ENCODE measurements at regions of chr5 and their contacts with region 1.

Region 1: DNA sequence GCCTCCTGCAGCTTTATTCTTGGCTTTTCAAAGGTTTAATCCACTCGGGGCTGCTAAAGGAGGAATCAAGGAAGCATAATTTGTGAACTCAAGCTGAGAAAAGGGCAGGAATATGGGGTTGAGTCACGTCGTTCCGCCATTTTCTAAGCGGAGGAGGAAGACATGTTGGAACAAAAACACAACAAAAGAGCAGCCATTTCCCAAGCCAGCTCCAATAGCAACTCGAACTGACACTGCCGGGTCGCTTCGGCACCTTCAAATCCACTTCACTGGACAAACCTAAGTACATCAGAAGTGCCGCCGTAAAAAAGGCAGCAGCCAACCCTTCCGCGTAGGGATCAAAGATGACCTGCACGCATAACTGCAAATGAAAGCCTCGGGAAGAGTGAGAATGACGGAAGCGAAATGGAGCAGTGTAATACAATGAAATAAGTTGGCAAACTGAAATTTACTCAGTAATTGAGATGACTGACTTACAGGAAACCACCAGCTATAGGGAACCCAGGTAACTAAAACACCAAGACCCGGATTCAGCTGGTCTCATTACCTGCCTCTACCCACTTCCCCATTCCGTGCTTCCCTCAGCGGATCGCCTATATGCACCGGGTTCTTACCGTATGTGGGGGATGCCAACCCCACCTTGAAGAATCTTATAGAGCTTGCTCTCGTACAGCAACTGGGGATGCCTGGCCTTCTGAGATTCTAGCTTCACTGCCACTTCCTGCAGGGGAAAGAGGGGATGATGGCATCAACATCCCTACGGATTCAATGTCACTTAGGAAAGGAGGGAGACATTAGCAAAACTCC is 1.6 kb downstream of the CSNK1A1 start:
- DNase-seq: peak in 6 of 7 donors; percentile 34 to 74 (median 45)
- H3K4me3 ChIP-seq: peak overlapping the region; percentile 10 to 98 (median 64)
- H3K27ac ChIP-seq: peak overlapping the region; percentile 84 to 100 (median 99)
- H3K4me1 ChIP-seq: peaks cover 14 to 47% of the 10 kb centered on the region in 2 donors
- H3K27me3 ChIP-seq: no peaks in the 10 kb centered on the region
- CTCF ChIP-seq: no peak
- POLR2A ChIP-seq: peak in 1 of 2 donors; percentile 15

Region 2: DNA sequence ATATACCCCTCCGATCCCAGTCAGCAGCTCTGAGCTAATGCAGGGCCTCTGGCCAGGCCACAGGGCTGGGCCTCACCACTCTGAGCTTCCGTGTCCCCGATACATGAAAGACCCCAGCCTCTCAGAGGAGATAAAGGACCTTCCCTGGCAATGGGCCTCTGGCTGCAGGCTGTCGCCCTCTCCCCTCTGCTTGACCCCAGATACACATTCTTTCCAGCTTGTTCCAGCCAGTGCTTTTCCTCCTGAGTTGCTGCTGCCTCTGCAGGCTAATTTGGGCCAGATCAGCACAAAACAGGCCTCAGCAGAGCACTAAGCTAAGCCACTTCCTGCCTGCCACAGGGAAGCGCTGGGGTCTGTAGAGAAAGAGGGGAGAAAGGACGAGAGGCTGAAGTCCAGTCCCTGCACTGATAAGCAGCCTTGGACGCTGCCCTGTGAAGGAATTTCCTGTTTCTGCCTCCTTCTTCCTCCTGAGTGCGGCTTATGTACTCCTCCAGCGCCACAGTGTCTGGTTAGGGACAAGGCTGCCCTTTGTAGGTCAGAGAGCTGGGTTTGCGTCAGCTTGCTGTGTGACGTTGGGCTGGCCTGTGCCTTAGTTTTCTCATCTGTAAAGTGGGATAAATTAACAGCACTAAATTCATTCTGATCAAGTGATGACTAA is 97.5 kb before region 1 on chr5:
- intact Hi-C with region 1: no loop called
- DNase-seq: peak in 6 of 7 donors; percentile 56 to 90 (median 74)
- H3K4me3 ChIP-seq: no peak overlapping the region
- H3K27ac ChIP-seq: peak overlapping the region in 4 of 5 donors; percentile 71 to 89 (median 77)
- H3K4me1 ChIP-seq: peaks cover 33 to 61% of the 10 kb centered on the region in 2 donors
- H3K27me3 ChIP-seq: no peaks in the 10 kb centered on the region
- CTCF ChIP-seq: no peak
- POLR2A ChIP-seq: peak in 1 of 2 donors; percentile 25

Region 3: DNA sequence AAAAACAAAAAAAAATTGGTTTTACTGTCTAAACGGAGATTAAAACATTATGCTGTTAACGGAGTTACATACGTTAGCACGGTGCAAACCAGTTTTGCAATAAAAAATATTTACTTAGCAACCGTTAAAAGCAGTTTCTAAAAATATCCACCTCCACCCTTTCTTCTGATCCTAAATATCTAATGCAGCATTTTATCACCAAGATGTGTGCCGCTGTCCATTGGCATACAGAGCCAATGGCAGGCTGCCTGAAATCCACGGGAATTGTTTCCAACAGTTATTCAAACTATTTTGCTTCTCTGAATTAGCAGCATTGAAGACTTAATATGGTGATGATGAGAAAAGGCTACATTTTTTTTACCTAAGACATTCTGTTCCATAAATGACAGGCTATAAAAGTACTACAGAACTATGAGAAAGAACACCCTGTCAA is 60.0 kb before region 1 on chr5:
- intact Hi-C with region 1: loop called in 1 of 2 experiments (anchors 10 kb)
- DNase-seq: peak in 6 of 7 donors; percentile 44 to 80 (median 47)
- H3K4me3 ChIP-seq: no peak overlapping the region
- H3K27ac ChIP-seq: peak overlapping the region in 1 of 5 donors; percentile 27
- H3K4me1 ChIP-seq: peaks cover 22 to 36% of the 10 kb centered on the region in 2 donors
- H3K27me3 ChIP-seq: no peaks in the 10 kb centered on the region
- CTCF ChIP-seq: no peak
- POLR2A ChIP-seq: no peak

Measured in adrenal gland (tissue), 19 donors.